Activated naive CD4-positive, alpha-beta T cell treated with anti-CD3 and anti-CD28 coated beads for 36 hours (primary cell): ENCODE measurements at regions of chr2 and their contacts with region 1.

Region 1: DNA sequence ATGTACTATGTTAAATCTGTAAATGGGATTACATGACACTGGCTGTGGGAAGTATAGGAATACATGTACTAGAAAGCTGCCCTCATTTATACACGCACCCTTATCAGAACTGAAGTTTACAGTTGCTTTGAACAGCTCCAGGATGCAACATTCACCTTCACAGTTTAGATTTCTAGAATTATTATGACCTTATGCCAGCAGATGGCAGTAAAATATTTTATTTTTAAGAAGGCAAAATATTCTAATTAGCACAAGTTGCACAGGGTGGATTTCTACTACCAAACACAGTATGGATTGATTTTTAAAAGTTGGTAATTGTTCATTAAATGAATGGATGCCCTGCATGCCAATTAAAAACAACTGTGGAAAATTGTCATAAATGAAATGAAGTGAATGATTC is 670.4 kb downstream of the KCNJ3 start:
- DNase-seq: no peak
- H3K4me3 Mint-ChIP-seq: no peak overlapping the region
- H3K27ac Mint-ChIP-seq: no peak overlapping the region
- H3K4me1 Mint-ChIP-seq: no peaks in the 10 kb centered on the region
- H3K27me3 Mint-ChIP-seq: peaks cover 2% of the 10 kb centered on the region

Region 2: DNA sequence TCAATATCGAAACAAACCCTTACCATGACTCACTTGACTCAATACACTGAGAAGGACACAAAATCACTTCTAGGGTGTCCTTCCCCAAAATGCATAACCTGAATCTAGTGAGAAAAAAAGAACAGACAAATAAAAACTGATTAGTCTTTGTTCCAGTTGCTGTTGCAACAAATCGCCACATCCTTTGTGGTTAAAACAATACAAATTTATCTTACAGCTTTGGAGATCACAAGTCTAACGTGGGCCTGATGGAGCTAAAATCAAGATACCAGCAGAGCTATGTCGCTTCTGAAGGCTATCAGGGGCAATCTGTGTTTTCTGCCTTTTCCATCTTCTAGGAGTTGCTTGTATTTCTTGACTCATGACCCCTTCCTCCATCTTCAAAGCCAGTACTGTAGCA is 128.8 kb before region 1 on chr2:
- CTCF ChIA-PET with region 1: no interaction called
- intact Hi-C with region 1: no loop called
- DNase-seq: no peak
- H3K4me3 Mint-ChIP-seq: no peak overlapping the region
- H3K27ac Mint-ChIP-seq: no peak overlapping the region
- H3K4me1 Mint-ChIP-seq: no peaks in the 10 kb centered on the region
- H3K27me3 Mint-ChIP-seq: no peaks in the 10 kb centered on the region

Region 3: DNA sequence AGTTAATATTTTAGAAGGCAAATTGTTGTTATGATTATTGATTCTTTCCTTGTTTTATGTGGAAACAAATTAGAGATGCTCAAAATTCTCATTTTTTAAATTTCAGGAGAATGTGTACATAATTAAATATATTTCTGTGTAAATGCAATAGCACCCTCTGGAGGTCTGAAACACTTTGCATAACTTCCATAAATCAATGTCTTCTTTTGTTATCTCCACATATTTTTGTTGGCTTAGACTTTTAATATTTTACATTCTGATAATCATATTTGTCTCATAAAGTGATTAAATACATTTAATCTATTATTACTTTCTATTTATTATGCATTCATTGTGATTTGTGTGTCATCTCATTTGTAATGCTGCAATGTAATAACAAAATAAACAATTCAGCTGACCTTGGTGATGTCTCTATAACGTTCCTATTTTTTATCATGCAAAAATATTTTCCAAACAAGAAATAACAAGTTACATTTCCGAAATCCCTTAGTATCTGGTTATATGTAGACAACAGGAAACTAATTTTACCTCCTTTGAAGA is 1686.8 kb after region 1 on chr2:
- CTCF ChIA-PET with region 1: no interaction called
- intact Hi-C with region 1: loop called (anchors 2 kb)
- DNase-seq: no peak
- H3K4me3 Mint-ChIP-seq: no peak overlapping the region
- H3K27ac Mint-ChIP-seq: no peak overlapping the region
- H3K4me1 Mint-ChIP-seq: no peaks in the 10 kb centered on the region
- H3K27me3 Mint-ChIP-seq: peaks cover 4% of the 10 kb centered on the region